HCT116 (cell line): ENCODE measurements at regions of chr14 and their contacts with region 1.

Region 1: GRCh38 chr14:67704484-67705089 is 2.9 kb downstream of the RDH12 start:
- DNase-seq: peak; percentile 72
- ATAC-seq: peak; percentile 87
- H3K4me3 ChIP-seq: no peak overlapping the region
- H3K27ac ChIP-seq: no peak overlapping the region
- H3K4me1 ChIP-seq: peaks cover 16 to 32% of the 10 kb centered on the region in 2 experiments
- H3K27me3 ChIP-seq: no peaks in the 10 kb centered on the region
- CTCF ChIP-seq: peak; percentile 71 to 84 (median 83)
- POLR2A ChIP-seq: no peak
- RAD21 ChIP-seq: peak; percentile 90

Region 2: DNA sequence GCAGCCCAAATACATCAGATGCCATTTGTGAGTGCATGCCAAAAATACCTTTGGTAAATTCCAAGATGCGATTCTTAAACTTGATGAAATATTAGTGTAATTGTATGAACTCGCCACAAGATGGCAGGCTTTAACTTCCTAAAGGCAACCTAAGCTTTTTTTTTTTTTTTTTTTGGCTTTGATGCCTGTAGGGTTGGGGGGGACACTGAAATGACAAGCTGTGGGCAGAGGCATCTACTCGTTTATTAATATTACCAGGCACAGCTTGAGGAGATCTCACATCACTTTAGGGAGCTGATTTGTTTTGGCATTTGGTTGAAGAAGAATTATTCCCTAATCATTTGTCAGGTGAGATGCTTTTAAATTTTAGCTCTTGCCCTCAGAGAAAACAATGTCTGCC is 1345.1 kb before region 1 on chr14:
- CTCF ChIA-PET with region 1: interaction called, 17 read pairs
- POLR2A ChIA-PET with region 1: no interaction called
- RAD21 ChIA-PET with region 1: no interaction called
- intact Hi-C with region 1: loop called (anchors 10 kb)
- DNase-seq: peak; percentile 64
- ATAC-seq: peak; percentile 46; the same call in 1 of the 2 replicates
- H3K4me3 ChIP-seq: no peak overlapping the region
- H3K27ac ChIP-seq: no peak overlapping the region
- H3K4me1 ChIP-seq: no peaks in the 10 kb centered on the region
- H3K27me3 ChIP-seq: 0 out of 2 replicates have a peak, but pooled peaks cover 5% of the 10 kb centered on the region
- CTCF ChIP-seq: peak; percentile 34 to 77 (median 54); a peak in 4 of 6 replicates
- POLR2A ChIP-seq: no peak
- RAD21 ChIP-seq: peak; percentile 78

Region 3: GRCh38 chr14:67166450-67166853 is 538.1 kb before region 1 on chr14:
- CTCF ChIA-PET with region 1: interaction called, 7 read pairs
- POLR2A ChIA-PET with region 1: no interaction called
- RAD21 ChIA-PET with region 1: no interaction called
- intact Hi-C with region 1: loop called (anchors 5 kb)
- DNase-seq: peak; percentile 24
- ATAC-seq: peak; percentile 72
- H3K4me3 ChIP-seq: no peak overlapping the region
- H3K27ac ChIP-seq: no peak overlapping the region
- H3K4me1 ChIP-seq: peaks cover 4 to 12% of the 10 kb centered on the region in 2 experiments; a peak in 2 of 4 replicates
- H3K27me3 ChIP-seq: no peaks in the 10 kb centered on the region
- CTCF ChIP-seq: peak; percentile 79 to 89 (median 87)
- POLR2A ChIP-seq: no peak
- RAD21 ChIP-seq: peak; percentile 94

Region 4: DNA sequence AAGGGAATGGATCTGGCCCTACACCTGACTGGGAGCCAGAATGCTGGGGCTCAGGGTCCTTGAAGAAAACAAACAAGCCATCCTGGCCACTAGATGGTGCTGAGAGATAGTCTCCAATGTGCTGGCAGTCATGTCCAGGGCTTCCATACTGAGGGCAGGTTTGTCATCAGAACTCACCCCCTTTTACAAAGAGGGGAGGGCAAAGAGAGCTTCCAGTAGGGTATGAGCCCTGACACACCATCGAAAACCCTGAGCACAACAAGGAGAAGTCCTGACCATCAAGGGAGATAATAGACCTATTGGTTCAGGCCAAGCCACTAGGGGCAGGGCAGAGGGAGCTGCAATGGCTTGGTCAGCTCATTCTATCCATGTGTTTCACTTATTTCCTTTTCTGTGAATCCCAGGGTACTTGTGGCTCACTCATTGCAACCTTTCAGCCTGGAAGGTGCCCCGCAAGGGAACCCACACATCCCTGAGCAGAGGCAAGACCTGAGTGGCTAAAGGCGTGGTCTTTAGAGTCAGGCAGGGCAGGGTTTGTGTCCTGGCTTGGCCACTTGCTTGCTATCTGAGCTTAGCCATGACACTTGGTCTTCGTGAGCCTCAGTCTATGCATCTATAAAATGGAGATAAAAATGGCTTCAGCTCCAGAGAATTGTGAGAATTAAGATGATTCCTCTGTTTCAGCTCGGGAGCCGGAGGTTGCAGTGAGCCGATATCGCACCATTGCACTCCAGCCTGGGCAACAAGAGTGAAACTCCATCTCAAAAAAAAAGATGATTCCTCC is 177.7 kb before region 1 on chr14:
- CTCF ChIA-PET with region 1: interaction called, 46 read pairs
- POLR2A ChIA-PET with region 1: no interaction called
- RAD21 ChIA-PET with region 1: interaction called in 1 of 2 experiments, 6 read pairs
- intact Hi-C with region 1: loop called (anchors 2 kb)
- DNase-seq: peak; percentile 59
- ATAC-seq: peak; percentile 93
- H3K4me3 ChIP-seq: no peak overlapping the region
- H3K27ac ChIP-seq: no peak overlapping the region
- H3K4me1 ChIP-seq: peaks cover 0 to 11% of the 10 kb centered on the region in 2 experiments; a peak in 2 of 4 replicates
- H3K27me3 ChIP-seq: peaks cover 22% of the 10 kb centered on the region; the same call in 1 of the 2 replicates
- CTCF ChIP-seq: peak; percentile 81 to 98 (median 98)
- POLR2A ChIP-seq: no peak
- RAD21 ChIP-seq: peak; percentile 84

Region 5: GRCh38 chr14:67583711-67584644 is 120.6 kb before region 1 on chr14:
- CTCF ChIA-PET with region 1: interaction called, 117 read pairs
- POLR2A ChIA-PET with region 1: interaction called, 12 read pairs
- RAD21 ChIA-PET with region 1: interaction called, 11 to 20 read pairs
- intact Hi-C with region 1: loop called (anchors 1 kb)
- DNase-seq: peak; percentile 47
- ATAC-seq: peak; percentile 97
- H3K4me3 ChIP-seq: no peak overlapping the region
- H3K27ac ChIP-seq: no peak overlapping the region
- H3K4me1 ChIP-seq: no peaks in the 10 kb centered on the region
- H3K27me3 ChIP-seq: no peaks in the 10 kb centered on the region
- CTCF ChIP-seq: peak; percentile 79 to 85 (median 80)
- POLR2A ChIP-seq: no peak
- RAD21 ChIP-seq: peak; percentile 90

Region 6: GRCh38 chr14:67619446-67620216 is 85.0 kb before region 1 on chr14 and contains the start of gene ARG2:
- CTCF ChIA-PET with region 1: interaction called, 36 read pairs
- POLR2A ChIA-PET with region 1: interaction called, 4 read pairs
- RAD21 ChIA-PET with region 1: interaction called, 5 to 8 read pairs
- intact Hi-C with region 1: loop called (anchors 2 kb)
- DNase-seq: peak; percentile 98
- ATAC-seq: peak; percentile 95
- H3K4me3 ChIP-seq: peak within 1 kb of the TSS; percentile 52 to 66
- H3K27ac ChIP-seq: no peak within 1 kb of the TSS
- H3K4me1 ChIP-seq: peaks cover 15 to 32% of the 10 kb centered on the region in 2 experiments
- H3K27me3 ChIP-seq: no peaks in the 10 kb centered on the region
- CTCF ChIP-seq: no peak
- POLR2A ChIP-seq: peak; percentile 46
- RAD21 ChIP-seq: 0 out of 2 replicates have a peak, but pooled peaks have one; percentile 34
- total RNA-seq, gene ARG2: 7.0 TPM

Region 7: GRCh38 chr14:67674481-67675169 is 30.0 kb before region 1 on chr14 and contains the start of gene VTI1B:
- CTCF ChIA-PET with region 1: interaction called, 13 read pairs
- POLR2A ChIA-PET with region 1: no interaction called
- RAD21 ChIA-PET with region 1: interaction called in 1 of 2 experiments, 3 read pairs
- intact Hi-C with region 1: loop called (anchors 5 kb)
- DNase-seq: peak; percentile 48
- ATAC-seq: peak; percentile 90
- H3K4me3 ChIP-seq: peak within 1 kb of the TSS; percentile 68 to 80
- H3K27ac ChIP-seq: peak within 1 kb of the TSS; percentile 94
- H3K4me1 ChIP-seq: peaks cover 4 to 19% of the 10 kb centered on the region in 2 experiments
- H3K27me3 ChIP-seq: no peaks in the 10 kb centered on the region
- CTCF ChIP-seq: no peak
- POLR2A ChIP-seq: no peak
- RAD21 ChIP-seq: no peak
- total RNA-seq, gene VTI1B: 86.3 TPM

Region 8: GRCh38 chr14:67816326-67817002 is 111.9 kb after region 1 on chr14 and contains the start of gene ZFYVE26:
- CTCF ChIA-PET with region 1: no interaction called
- POLR2A ChIA-PET with region 1: no interaction called
- RAD21 ChIA-PET with region 1: no interaction called
- intact Hi-C with region 1: no loop called
- DNase-seq: peak; percentile 90
- ATAC-seq: peak; percentile 94
- H3K4me3 ChIP-seq: peak within 1 kb of the TSS; percentile 67 to 85
- H3K27ac ChIP-seq: peak within 1 kb of the TSS; percentile 41; the same call in 1 of the 2 replicates
- H3K4me1 ChIP-seq: peaks cover 6 to 25% of the 10 kb centered on the region in 2 experiments; a peak in 3 of 4 replicates
- H3K27me3 ChIP-seq: no peaks in the 10 kb centered on the region
- CTCF ChIP-seq: no peak
- POLR2A ChIP-seq: no peak
- RAD21 ChIP-seq: no peak
- total RNA-seq, gene ZFYVE26: 13.2 TPM

Region 9: GRCh38 chr14:68749487-68750475 is 1045.2 kb after region 1 on chr14:
- CTCF ChIA-PET with region 1: no interaction called
- POLR2A ChIA-PET with region 1: no interaction called
- RAD21 ChIA-PET with region 1: no interaction called
- intact Hi-C with region 1: no loop called
- DNase-seq: no peak
- ATAC-seq: no peak
- H3K4me3 ChIP-seq: no peak overlapping the region
- H3K27ac ChIP-seq: no peak overlapping the region
- H3K4me1 ChIP-seq: peaks cover 8 to 9% of the 10 kb centered on the region in 2 experiments; a peak in 2 of 4 replicates
- H3K27me3 ChIP-seq: no peaks in the 10 kb centered on the region
- CTCF ChIP-seq: no peak
- POLR2A ChIP-seq: no peak
- RAD21 ChIP-seq: no peak